Activated CD4-positive, alpha-beta memory T cell treated with anti-CD3 and anti-CD28 coated beads for 36 hours (primary cell): ENCODE measurements at regions of chr2 and their contacts with region 1.

Region 1: GRCh38 chr2:234483568-234484251 is 13.2 kb downstream of the ARL4C start:
- DNase-seq: peak; percentile 90
- H3K4me3 Mint-ChIP-seq: peak overlapping the region; percentile 49
- H3K27ac Mint-ChIP-seq: peak overlapping the region; percentile 88
- H3K4me1 Mint-ChIP-seq: peaks cover 90% of the 10 kb centered on the region
- H3K27me3 Mint-ChIP-seq: no peaks in the 10 kb centered on the region

Region 2: GRCh38 chr2:234374736-234375135 is 109.0 kb before region 1 on chr2:
- CTCF ChIA-PET with region 1: interaction called, 3 read pairs
- POLR2A ChIA-PET with region 1: no interaction called
- intact Hi-C with region 1: loop called (anchors 5 kb)
- DNase-seq: no peak
- H3K4me3 Mint-ChIP-seq: no peak overlapping the region
- H3K27ac Mint-ChIP-seq: no peak overlapping the region
- H3K4me1 Mint-ChIP-seq: peaks cover 54% of the 10 kb centered on the region
- H3K27me3 Mint-ChIP-seq: no peaks in the 10 kb centered on the region

Region 3: GRCh38 chr2:234451852-234452625 is 31.7 kb before region 1 on chr2:
- CTCF ChIA-PET with region 1: interaction called, 6 read pairs
- POLR2A ChIA-PET with region 1: interaction called, 13 read pairs
- intact Hi-C with region 1: no loop called
- DNase-seq: no peak
- H3K4me3 Mint-ChIP-seq: peak overlapping the region; percentile 72
- H3K27ac Mint-ChIP-seq: peak overlapping the region; percentile 88
- H3K4me1 Mint-ChIP-seq: peaks cover 78% of the 10 kb centered on the region
- H3K27me3 Mint-ChIP-seq: no peaks in the 10 kb centered on the region

Region 4: GRCh38 chr2:235026137-235026536 is 542.4 kb after region 1 on chr2:
- CTCF ChIA-PET with region 1: no interaction called
- POLR2A ChIA-PET with region 1: no interaction called
- intact Hi-C with region 1: no loop called
- DNase-seq: no peak
- H3K4me3 Mint-ChIP-seq: no peak overlapping the region
- H3K27ac Mint-ChIP-seq: no peak overlapping the region
- H3K4me1 Mint-ChIP-seq: no peaks in the 10 kb centered on the region
- H3K27me3 Mint-ChIP-seq: no peaks in the 10 kb centered on the region